ENCODE measurements at regions of chr20 and their contacts with region 1.

Region 1: GRCh38 chr20:5222919-5223634 is 93.7 kb downstream of the PROKR2 start:
- DNase-seq: peak; percentile 13 to 68
- H3K4me3 ChIP-seq: no peak overlapping the region
- H3K27ac ChIP-seq: no peak overlapping the region
- H3K4me1 ChIP-seq: no peaks in the 10 kb centered on the region
- H3K27me3 ChIP-seq: no peaks in the 10 kb centered on the region
- CTCF ChIP-seq: peak; percentile 75 to 91 (median 78)
- EP300 ChIP-seq: no peak
- POLR2A ChIP-seq: no peak
- RAD21 ChIP-seq: peak; percentile 81 to 87

Region 2: GRCh38 chr20:5078399-5078958 is 144.6 kb before region 1 on chr20:
- CTCF ChIA-PET with region 1: no interaction called
- POLR2A ChIA-PET with region 1: no interaction called
- DNase-seq: no peak
- H3K4me3 ChIP-seq: no peak overlapping the region
- H3K27ac ChIP-seq: no peak overlapping the region
- H3K4me1 ChIP-seq: peaks cover 0 to 4% (median 2%) of the 10 kb centered on the region in 4 experiments; a peak in 4 of 7 replicates
- H3K27me3 ChIP-seq: no peaks in the 10 kb centered on the region
- CTCF ChIP-seq: no peak
- EP300 ChIP-seq: no peak
- POLR2A ChIP-seq: no peak
- RAD21 ChIP-seq: no peak

Region 3: GRCh38 chr20:5171790-5172164 is 51.3 kb before region 1 on chr20:
- CTCF ChIA-PET with region 1: no interaction called
- POLR2A ChIA-PET with region 1: no interaction called
- DNase-seq: no peak
- H3K4me3 ChIP-seq: no peak overlapping the region
- H3K27ac ChIP-seq: no peak overlapping the region
- H3K4me1 ChIP-seq: peaks cover 9 to 31% (median 23%) of the 10 kb centered on the region in 4 experiments; a peak in 5 of 7 replicates
- H3K27me3 ChIP-seq: no peaks in the 10 kb centered on the region
- CTCF ChIP-seq: no peak
- EP300 ChIP-seq: no peak
- POLR2A ChIP-seq: no peak
- RAD21 ChIP-seq: no peak

Region 4: DNA sequence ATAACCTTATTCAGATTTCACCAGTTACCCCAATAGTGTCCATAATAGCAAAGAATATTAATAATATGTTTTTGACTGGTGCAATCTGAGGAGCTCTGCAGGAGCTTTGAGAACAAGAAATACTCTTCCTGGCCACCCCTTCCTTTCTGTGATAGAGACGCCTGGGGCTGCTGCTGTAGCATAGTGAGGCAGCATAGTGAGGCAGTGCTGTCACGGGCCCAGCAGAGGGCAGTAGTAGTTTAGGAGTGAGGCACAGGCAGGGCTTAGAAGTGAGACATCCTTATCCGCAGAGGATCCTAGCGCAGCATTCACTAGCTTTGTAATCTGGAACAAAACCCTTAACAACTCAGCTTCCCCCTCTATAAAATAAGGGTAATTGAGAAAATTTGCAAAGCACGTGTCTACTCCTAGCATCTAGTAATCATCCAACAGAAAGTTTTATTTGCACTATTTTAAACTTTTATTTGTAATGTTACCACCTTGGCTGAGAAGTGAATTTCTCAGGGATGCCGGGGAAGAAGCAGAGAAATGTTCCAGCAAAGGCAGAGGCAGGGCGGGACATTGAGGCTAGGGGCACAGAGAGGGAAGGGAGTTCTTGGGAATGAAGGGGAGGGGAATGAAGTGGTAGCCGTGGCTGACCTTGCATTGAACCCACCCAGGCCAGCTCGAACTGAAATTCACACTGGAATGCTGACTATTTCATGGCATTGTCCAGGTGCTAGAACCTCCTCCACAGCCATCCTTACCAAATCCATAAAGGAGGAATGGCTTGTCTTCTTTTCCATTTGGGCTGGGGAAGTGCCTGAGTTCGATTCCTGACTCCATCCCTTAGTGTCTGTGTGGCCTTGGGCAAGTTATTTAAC is 17.5 kb before region 1 on chr20:
- CTCF ChIA-PET with region 1: interaction called, 242 read pairs
- POLR2A ChIA-PET with region 1: interaction called, 4 read pairs
- DNase-seq: peak; percentile 53 to 86
- H3K4me3 ChIP-seq: no peak overlapping the region
- H3K27ac ChIP-seq: no peak overlapping the region
- H3K4me1 ChIP-seq: peaks cover 0 to 2% (median 0%) of the 10 kb centered on the region in 4 experiments; a peak in 1 of 7 replicates
- H3K27me3 ChIP-seq: no peaks in the 10 kb centered on the region
- CTCF ChIP-seq: peak; percentile 94 to 97 (median 97)
- EP300 ChIP-seq: no peak
- POLR2A ChIP-seq: no peak
- RAD21 ChIP-seq: peak; percentile 95 to 97

Region 5: DNA sequence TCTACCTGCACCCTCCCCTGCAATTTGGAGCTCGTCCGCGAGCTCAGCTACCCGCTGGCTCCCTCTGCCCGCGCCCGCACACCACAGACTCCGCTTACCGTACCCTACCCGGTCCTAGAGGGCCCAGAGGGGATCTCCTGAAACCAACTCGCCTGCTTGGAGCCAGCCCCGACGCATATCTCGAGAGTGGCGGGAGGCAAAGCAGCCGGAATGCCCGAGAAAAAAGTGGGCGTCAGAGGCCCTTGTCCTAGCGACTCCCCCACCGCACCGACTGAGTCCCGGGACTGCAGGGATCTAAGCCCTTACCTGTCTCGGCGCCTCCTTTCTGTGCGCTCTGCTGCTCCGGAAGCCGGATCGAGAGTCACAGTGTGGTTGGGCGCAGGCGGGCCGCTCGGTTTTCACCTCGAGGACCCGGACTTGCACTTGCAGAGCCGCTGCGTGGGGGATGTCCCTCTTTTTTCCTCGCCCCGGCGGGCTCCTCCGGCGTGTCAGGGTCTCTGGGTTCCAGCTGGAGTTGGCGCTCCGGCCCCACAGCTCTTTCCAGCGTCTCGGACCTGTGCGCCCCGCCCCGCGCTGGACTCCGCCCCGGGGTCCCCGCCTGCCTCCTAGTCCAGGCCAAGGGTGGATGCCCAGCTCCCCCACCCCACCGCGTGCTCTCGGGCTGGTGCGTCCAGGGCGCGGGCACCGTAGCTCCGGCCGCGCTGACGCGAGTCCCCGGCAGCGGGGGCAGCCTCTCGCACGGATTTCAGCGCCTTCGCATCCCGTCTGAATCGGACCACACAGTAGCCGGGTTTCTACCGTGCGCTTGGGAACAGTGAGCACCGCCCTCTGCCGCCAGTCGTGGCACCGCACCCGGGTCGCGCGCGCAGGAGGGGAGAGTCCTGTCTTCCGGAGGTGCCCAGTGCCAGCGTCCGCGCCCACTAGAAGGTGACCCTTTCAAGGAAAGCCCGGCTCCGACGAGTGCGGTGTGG is 93.4 kb after region 1 on chr20 and contains the start of gene PROKR2:
- CTCF ChIA-PET with region 1: interaction called, 16 read pairs
- POLR2A ChIA-PET with region 1: interaction called, 3 read pairs
- DNase-seq: peak; percentile 17 to 88
- H3K4me3 ChIP-seq: peak within 1 kb of the TSS; percentile 60 to 79 (median 74)
- H3K27ac ChIP-seq: no peak within 1 kb of the TSS
- H3K4me1 ChIP-seq: peaks cover 0 to 6% (median under 1%) of the 10 kb centered on the region in 4 experiments; a peak in 2 of 7 replicates
- H3K27me3 ChIP-seq: peaks cover 12 to 42% (median 34%) of the 10 kb centered on the region in 4 experiments
- CTCF ChIP-seq: peak; percentile 47 to 72 (median 65)
- EP300 ChIP-seq: no peak
- POLR2A ChIP-seq: no peak; a peak in 1 of 3 replicates
- RAD21 ChIP-seq: peak; percentile 46 to 66
- total RNA-seq, gene PROKR2: 2.6 and 3.3 TPM in 2 replicates

Region 6: DNA sequence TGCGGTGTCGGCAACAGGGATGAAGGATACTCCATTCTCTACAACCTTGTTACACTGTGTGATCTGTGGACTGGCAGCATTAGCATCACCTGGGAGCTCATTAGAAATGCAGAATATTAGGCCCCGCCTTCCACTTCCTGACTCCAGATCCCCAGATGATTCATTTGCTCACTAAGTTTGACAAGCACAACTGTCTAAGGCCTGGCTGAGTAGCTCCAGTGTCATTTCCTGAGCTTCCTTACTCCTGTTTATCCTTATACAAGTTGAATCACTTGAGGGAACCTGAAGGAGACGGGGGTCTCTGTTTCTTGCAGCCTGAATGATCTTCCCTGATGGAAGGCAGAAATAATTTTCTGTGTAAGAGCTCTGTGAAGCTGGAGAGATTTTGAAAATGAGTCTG is 126.4 kb after region 1 on chr20:
- CTCF ChIA-PET with region 1: no interaction called
- POLR2A ChIA-PET with region 1: no interaction called
- DNase-seq: no peak
- H3K4me3 ChIP-seq: no peak overlapping the region
- H3K27ac ChIP-seq: no peak overlapping the region
- H3K4me1 ChIP-seq: no peaks in the 10 kb centered on the region
- H3K27me3 ChIP-seq: no peaks in the 10 kb centered on the region
- CTCF ChIP-seq: no peak
- EP300 ChIP-seq: no peak
- POLR2A ChIP-seq: no peak
- RAD21 ChIP-seq: no peak

Region 7: DNA sequence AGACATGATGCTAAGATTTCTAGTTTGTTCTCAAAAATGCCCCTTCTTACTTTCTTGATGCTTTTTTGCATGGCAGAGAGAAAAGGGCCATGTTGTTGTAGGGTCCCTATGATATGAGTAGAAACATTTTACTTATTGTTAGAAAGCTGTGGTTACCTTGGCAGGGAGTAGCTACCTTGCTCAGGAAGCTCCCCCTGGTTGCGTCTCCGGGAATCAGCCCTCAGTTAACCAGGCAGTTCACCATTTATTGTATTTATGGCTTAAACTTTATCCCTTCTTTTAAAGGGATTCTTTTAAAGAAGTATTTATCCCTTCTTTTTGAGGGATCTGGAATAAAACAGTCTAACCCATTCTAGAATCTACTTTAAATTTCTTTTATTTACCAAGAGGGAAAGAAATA is 207.6 kb after region 1 on chr20:
- CTCF ChIA-PET with region 1: interaction called, 10 read pairs
- POLR2A ChIA-PET with region 1: no interaction called
- DNase-seq: no peak
- H3K4me3 ChIP-seq: no peak overlapping the region
- H3K27ac ChIP-seq: no peak overlapping the region
- H3K4me1 ChIP-seq: no peaks in the 10 kb centered on the region
- H3K27me3 ChIP-seq: peaks cover 0 to 2% (median 0%) of the 10 kb centered on the region in 4 experiments; a peak in 1 of 7 replicates
- CTCF ChIP-seq: peak; percentile 39 to 49 (median 40)
- EP300 ChIP-seq: no peak
- POLR2A ChIP-seq: no peak
- RAD21 ChIP-seq: peak; percentile 34 to 40; a peak in 3 of 4 replicates

Measured in H1 (cell line).